ENCODE measurements at regions of chr1 and their contacts with region 1.

Region 1: DNA sequence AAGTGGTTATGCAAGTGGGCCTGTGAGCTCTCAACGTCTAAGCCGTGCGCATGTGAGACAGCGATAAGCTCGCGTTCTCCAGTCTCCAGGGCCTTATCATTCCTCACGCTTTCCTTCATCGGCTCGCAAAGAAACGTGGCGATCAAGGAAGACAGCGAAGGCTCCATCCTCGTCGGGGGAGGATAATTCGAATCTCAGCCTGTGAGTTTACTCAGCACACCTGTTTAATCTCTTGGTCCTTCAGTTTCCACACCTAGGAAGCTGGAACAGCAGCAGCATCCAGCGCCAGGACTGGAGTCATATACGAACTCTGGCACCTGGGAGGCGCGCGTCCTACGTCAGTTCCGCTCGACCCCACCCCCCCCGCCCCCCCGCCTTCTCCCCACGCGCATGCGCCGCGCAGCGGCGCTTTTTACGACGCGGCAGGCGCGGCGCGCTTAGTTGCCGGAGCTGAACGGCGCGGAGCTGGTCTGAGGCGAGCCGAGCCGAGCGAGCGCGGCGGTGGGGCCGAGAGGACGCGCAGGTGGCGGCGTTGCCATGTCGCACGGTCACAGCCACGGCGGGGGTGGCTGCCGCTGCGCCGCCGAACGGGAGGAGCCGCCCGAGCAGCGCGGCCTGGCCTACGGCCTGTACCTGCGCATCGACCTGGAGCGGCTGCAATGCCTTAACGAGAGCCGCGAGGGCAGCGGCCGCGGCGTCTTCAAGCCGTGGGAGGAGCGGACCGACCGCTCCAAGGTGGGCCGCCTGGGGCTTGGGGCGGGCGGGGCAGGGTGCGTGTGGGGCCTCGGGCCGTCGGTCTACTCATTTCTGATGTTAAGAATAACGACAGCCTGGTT is at the start of gene PITHD1:
- H3K4me3 Mint-ChIP-seq: peak within 1 kb of the TSS; percentile 79
- H3K27ac Mint-ChIP-seq: peak within 1 kb of the TSS; percentile 83
- H3K4me1 Mint-ChIP-seq: peaks cover 13% of the 10 kb centered on the region
- H3K27me3 Mint-ChIP-seq: no peaks in the 10 kb centered on the region

Region 2: GRCh38 chr1:23643736-23644554 is 134.3 kb before region 1 on chr1:
- intact Hi-C with region 1: no loop called
- H3K4me3 Mint-ChIP-seq: no peak overlapping the region
- H3K27ac Mint-ChIP-seq: no peak overlapping the region
- H3K4me1 Mint-ChIP-seq: peaks cover 8% of the 10 kb centered on the region
- H3K27me3 Mint-ChIP-seq: peaks cover 23% of the 10 kb centered on the region

Region 3: GRCh38 chr1:23699280-23700179 is 78.7 kb before region 1 on chr1:
- intact Hi-C with region 1: no loop called
- H3K4me3 Mint-ChIP-seq: no peak overlapping the region
- H3K27ac Mint-ChIP-seq: no peak overlapping the region
- H3K4me1 Mint-ChIP-seq: peaks cover 28% of the 10 kb centered on the region
- H3K27me3 Mint-ChIP-seq: no peaks in the 10 kb centered on the region

Region 4: DNA sequence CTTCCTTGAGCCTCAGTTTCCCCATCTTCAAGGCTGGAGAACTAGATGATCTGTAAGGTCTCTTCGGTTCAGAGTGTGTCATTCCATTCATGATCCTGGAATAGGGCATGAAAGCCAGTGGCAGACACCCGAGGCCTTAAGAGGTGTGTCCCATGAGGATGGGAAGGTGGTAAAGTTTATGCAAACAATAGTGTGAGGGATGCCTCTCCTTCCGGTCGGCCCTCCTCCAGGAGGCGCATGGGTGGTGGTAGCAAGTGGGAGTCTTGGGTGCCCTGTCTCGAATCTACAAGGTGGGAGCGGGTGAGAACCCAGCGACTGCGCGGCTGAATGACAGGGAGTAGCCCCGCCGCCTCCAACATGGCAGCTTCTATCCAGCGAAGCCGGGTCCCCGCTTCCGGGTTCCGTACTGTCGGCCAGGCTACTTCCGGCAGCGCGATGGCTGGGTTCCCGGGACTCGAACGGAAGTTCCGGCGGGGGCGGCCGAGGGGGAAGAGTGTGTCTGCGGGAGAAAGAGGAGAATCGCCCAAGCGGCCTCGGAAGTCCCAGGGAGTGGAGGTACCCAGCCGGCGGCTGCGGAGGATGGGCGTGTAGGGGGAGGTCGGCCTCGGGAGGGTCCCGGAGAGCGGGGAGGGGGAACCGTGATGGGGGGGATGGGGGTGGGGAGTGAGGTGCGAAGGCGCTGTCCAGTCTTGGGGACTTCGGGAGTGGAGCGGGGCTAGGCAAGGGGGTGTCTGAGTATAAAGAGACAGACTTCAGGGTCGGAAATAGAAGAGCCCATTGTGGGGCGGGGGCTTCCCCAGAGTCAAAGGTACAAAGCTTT is 12.7 kb after region 1 on chr1 and contains the start of gene LYPLA2:
- intact Hi-C with region 1: loop called (anchors 1 kb)
- H3K4me3 Mint-ChIP-seq: peak within 1 kb of the TSS; percentile 92
- H3K27ac Mint-ChIP-seq: peak within 1 kb of the TSS; percentile 88
- H3K4me1 Mint-ChIP-seq: peaks cover 44% of the 10 kb centered on the region
- H3K27me3 Mint-ChIP-seq: no peaks in the 10 kb centered on the region

Region 5: GRCh38 chr1:23867953-23868556 is 89.9 kb after region 1 on chr1 and contains the start of gene FUCA1:
- intact Hi-C with region 1: loop called (anchors 10 kb)
- H3K4me3 Mint-ChIP-seq: peak within 1 kb of the TSS; percentile 85
- H3K27ac Mint-ChIP-seq: peak within 1 kb of the TSS; percentile 55
- H3K4me1 Mint-ChIP-seq: peaks cover 52% of the 10 kb centered on the region
- H3K27me3 Mint-ChIP-seq: no peaks in the 10 kb centered on the region